ENCODE measurements at regions of chr3 and their contacts with region 1.

Region 1: GRCh38 chr3:11271986-11272904 is at the start of gene ATG7:
- DNase-seq: peak; percentile 95 to 98 (median 97)
- H3K4me3 ChIP-seq: peak within 1 kb of the TSS; percentile 100
- H3K4me3 Mint-ChIP-seq: peak within 1 kb of the TSS; percentile 89 to 99 (median 97)
- H3K27ac ChIP-seq: peak within 1 kb of the TSS; percentile 99
- H3K27ac Mint-ChIP-seq: peak within 1 kb of the TSS; percentile 95 to 100 (median 98)
- H3K4me1 ChIP-seq: peaks cover 23% of the 10 kb centered on the region
- H3K4me1 Mint-ChIP-seq: peaks cover 49 to 56% (median 50%) of the 10 kb centered on the region in 3 donors
- H3K27me3 ChIP-seq: no peaks in the 10 kb centered on the region
- H3K27me3 Mint-ChIP-seq: no peaks in the 10 kb centered on the region
- total RNA-seq, gene ATG7: 28.0 to 28.2 TPM

Region 2: GRCh38 chr3:11282250-11283138 is 10.2 kb after region 1 on chr3:
- CTCF ChIA-PET with region 1: interaction called, 5 read pairs
- POLR2A ChIA-PET with region 1: interaction called, 10 read pairs
- DNase-seq: no peak
- H3K4me3 ChIP-seq: no peak overlapping the region
- H3K4me3 Mint-ChIP-seq: no peak overlapping the region
- H3K27ac ChIP-seq: no peak overlapping the region
- H3K27ac Mint-ChIP-seq: peak overlapping the region in 5 of 8 donors; percentile 29 to 75 (median 52)
- H3K4me1 ChIP-seq: peaks cover under 1% of the 10 kb centered on the region
- H3K4me1 Mint-ChIP-seq: peaks cover 14 to 35% (median 19%) of the 10 kb centered on the region in 3 donors
- H3K27me3 ChIP-seq: no peaks in the 10 kb centered on the region
- H3K27me3 Mint-ChIP-seq: no peaks in the 10 kb centered on the region

Region 3: GRCh38 chr3:11290743-11291680 is 18.8 kb after region 1 on chr3:
- CTCF ChIA-PET with region 1: interaction called, 7 read pairs
- POLR2A ChIA-PET with region 1: interaction called, 20 read pairs
- DNase-seq: peak; percentile 10 to 63 (median 49)
- H3K4me3 ChIP-seq: no peak overlapping the region
- H3K4me3 Mint-ChIP-seq: peak overlapping the region in 6 of 7 donors; percentile 58 to 71 (median 66)
- H3K27ac ChIP-seq: peak overlapping the region; percentile 69
- H3K27ac Mint-ChIP-seq: peak overlapping the region; percentile 88 to 99 (median 95)
- H3K4me1 ChIP-seq: peaks cover 50% of the 10 kb centered on the region
- H3K4me1 Mint-ChIP-seq: peaks cover 54 to 61% (median 56%) of the 10 kb centered on the region in 3 donors
- H3K27me3 ChIP-seq: no peaks in the 10 kb centered on the region
- H3K27me3 Mint-ChIP-seq: no peaks in the 10 kb centered on the region